H1 (cell line): ENCODE measurements at regions of chr6 and their contacts with region 1.

Region 1: DNA sequence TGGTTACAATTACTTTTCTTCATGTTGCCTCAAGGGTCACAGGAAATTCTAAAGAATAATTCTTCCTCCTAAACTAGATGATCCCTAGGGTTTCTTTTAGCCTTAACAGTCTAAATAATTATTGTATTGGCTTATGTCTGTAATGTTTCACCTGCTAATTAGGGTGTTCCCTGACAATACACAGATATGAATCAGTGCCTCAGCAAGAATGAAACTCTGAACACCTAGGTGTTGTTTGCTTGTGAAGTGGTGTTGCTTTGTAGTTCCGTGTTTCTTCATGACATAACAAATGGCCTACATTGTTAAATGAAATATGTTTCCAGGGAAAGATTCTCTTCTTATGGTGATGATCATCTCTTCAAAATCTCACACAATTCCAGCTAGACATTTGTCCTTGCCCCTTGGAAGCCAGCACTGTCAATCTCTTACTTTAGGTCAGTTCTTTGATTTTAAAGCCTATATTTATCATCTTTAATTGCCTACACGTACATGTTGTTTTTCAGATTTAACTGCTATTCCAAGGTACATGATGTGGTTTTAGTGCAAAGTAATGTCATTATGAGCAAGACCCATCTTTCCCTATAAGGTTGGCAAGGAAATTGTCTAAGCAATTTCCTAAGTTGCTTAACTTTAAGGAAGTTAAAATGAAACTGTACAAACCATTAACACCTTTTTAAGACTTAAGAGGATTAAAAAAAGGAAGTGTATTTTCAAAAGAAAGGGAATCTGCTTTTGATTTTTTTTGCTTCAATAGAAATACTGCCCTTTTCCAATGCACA is 111.9 kb downstream of the TBC1D7 start:
- DNase-seq: no peak
- H3K4me3 ChIP-seq: no peak overlapping the region
- H3K27ac ChIP-seq: no peak overlapping the region
- H3K4me1 ChIP-seq: no peaks in the 10 kb centered on the region
- H3K27me3 ChIP-seq: no peaks in the 10 kb centered on the region
- CTCF ChIP-seq: no peak
- EP300 ChIP-seq: no peak
- POLR2A ChIP-seq: no peak
- RAD21 ChIP-seq: no peak

Region 2: GRCh38 chr6:13183415-13184088 is 32.9 kb before region 1 on chr6:
- CTCF ChIA-PET with region 1: no interaction called
- POLR2A ChIA-PET with region 1: no interaction called
- DNase-seq: no peak
- H3K4me3 ChIP-seq: no peak overlapping the region
- H3K27ac ChIP-seq: no peak overlapping the region
- H3K4me1 ChIP-seq: peaks cover 0 to 2% (median 0%) of the 10 kb centered on the region in 4 experiments; a peak in 1 of 7 replicates
- H3K27me3 ChIP-seq: no peaks in the 10 kb centered on the region
- CTCF ChIP-seq: no peak
- EP300 ChIP-seq: no peak
- POLR2A ChIP-seq: no peak
- RAD21 ChIP-seq: no peak

Region 3: GRCh38 chr6:13194852-13195251 is 21.6 kb before region 1 on chr6:
- CTCF ChIA-PET with region 1: interaction called, 10 read pairs
- POLR2A ChIA-PET with region 1: no interaction called
- DNase-seq: peak in 1 of 2 experiments; percentile 29
- H3K4me3 ChIP-seq: no peak overlapping the region
- H3K27ac ChIP-seq: no peak overlapping the region
- H3K4me1 ChIP-seq: peaks cover 2 to 9% (median 5%) of the 10 kb centered on the region in 4 experiments; a peak in 4 of 7 replicates
- H3K27me3 ChIP-seq: no peaks in the 10 kb centered on the region
- CTCF ChIP-seq: peak; percentile 23 to 69 (median 59)
- EP300 ChIP-seq: no peak
- POLR2A ChIP-seq: no peak
- RAD21 ChIP-seq: peak; percentile 63 to 72

Region 4: DNA sequence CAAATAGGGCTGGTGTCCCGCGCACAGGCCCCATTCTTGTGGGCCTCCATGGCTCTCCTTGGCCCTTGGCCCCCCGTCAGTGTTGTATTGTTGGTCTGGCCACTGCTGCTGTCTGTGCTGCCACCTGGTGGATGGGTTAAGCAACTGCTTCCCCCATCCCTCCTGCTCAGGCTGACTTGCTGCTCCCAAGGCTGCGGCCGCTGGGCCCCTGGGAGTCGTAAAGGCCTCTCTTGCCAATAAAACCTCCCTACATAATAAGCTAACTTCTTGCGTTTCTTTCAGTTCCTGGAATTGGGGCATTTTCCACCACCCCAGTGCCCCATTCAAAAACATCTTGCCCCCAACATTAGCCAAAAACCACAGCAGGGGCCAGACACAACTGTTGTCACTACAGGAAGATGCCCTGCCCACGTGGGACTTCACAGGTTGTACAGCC is 928.3 kb after region 1 on chr6:
- CTCF ChIA-PET with region 1: no interaction called
- POLR2A ChIA-PET with region 1: no interaction called
- DNase-seq: peak; percentile 76 to 92
- H3K4me3 ChIP-seq: no peak overlapping the region
- H3K27ac ChIP-seq: no peak overlapping the region
- H3K4me1 ChIP-seq: no peaks in the 10 kb centered on the region; a peak in 2 of 7 replicates
- H3K27me3 ChIP-seq: no peaks in the 10 kb centered on the region; a peak in 1 of 7 replicates
- CTCF ChIP-seq: peak; percentile 88 to 98 (median 97)
- EP300 ChIP-seq: no peak
- POLR2A ChIP-seq: no peak
- RAD21 ChIP-seq: peak; percentile 90 to 93